Activated CD4-positive, alpha-beta T cell treated with anti-CD3 and anti-CD28 coated beads for 36 hours (primary cell): ENCODE measurements at regions of chr9 and their contacts with region 1.

Region 1: GRCh38 chr9:7298123-7298522 is 501.5 kb downstream of the DMAC1 start:
- DNase-seq: peak; percentile 76
- ATAC-seq: peak; percentile 95
- H3K4me3 Mint-ChIP-seq: no peak overlapping the region
- H3K27ac Mint-ChIP-seq: peak overlapping the region; percentile 7
- H3K4me1 Mint-ChIP-seq: peaks cover 20% of the 10 kb centered on the region
- H3K27me3 Mint-ChIP-seq: peaks cover 29% of the 10 kb centered on the region

Region 2: DNA sequence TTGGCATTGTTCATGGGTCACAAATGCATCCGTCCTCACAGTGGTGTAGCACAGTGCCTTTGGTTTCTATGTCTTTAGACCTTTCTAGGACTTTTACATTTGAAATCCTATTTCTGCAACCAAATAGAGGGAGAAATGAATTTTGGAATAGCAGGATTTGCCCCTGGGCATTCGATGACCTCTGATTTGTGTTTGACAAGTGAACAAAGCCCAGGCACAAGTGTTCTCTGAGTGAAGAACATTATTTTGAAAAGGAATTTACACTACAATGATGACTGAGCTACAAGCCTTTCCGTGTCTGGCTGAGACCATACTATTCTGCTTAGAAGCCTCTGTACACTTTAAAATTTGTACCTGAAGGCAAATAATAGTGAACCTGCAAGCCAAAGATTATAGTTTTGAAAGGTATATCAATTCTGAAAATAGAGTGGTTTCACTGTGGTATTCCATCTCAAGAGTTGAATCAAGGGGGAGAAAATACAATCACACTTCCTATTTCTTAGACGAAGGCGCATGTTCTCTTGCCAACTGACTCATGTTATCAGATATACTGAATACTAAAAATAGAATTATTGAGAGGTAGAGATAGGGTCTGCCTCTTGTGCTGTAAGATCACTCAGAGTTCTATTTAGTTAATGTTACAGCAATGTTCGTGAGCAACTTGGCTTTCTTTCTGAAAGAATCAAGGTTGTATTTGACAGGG is 242.8 kb before region 1 on chr9:
- CTCF ChIA-PET with region 1: no interaction called
- POLR2A ChIA-PET with region 1: no interaction called
- intact Hi-C with region 1: loop called in 1 of 2 experiments (anchors 10 kb)
- DNase-seq: no peak
- ATAC-seq: peak; percentile 30
- H3K4me3 Mint-ChIP-seq: no peak overlapping the region
- H3K27ac Mint-ChIP-seq: no peak overlapping the region
- H3K4me1 Mint-ChIP-seq: peaks cover 11% of the 10 kb centered on the region
- H3K27me3 Mint-ChIP-seq: no peaks in the 10 kb centered on the region

Region 3: DNA sequence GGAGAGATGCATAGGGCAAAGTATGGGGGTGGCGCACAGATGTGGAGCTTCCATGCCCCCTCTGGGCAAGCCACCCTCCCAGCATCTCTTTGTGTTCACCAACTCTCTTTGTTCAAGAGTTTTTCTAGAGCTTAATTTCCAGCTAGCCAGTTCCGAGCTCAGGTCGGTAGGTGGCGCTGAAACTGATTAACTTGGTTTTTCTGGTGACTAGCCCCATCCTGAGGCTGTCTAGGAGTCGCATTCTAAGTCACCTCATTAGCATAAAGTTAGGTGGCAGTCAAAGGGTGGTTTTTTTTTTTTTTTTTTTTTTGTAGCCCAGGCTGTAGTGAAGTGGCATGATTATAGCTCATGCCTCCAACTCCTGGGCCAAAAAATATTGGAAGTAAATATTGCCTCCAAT is 64.0 kb before region 1 on chr9:
- CTCF ChIA-PET with region 1: interaction called, 3 read pairs
- POLR2A ChIA-PET with region 1: interaction called, 3 read pairs
- intact Hi-C with region 1: loop called in 1 of 2 experiments (anchors 5 kb)
- DNase-seq: peak; percentile 76
- ATAC-seq: peak; percentile 96
- H3K4me3 Mint-ChIP-seq: no peak overlapping the region
- H3K27ac Mint-ChIP-seq: no peak overlapping the region
- H3K4me1 Mint-ChIP-seq: no peaks in the 10 kb centered on the region
- H3K27me3 Mint-ChIP-seq: peaks cover 12% of the 10 kb centered on the region

Region 4: GRCh38 chr9:7246917-7247522 is 51.1 kb before region 1 on chr9:
- CTCF ChIA-PET with region 1: no interaction called
- POLR2A ChIA-PET with region 1: no interaction called
- intact Hi-C with region 1: no loop called
- DNase-seq: no peak
- ATAC-seq: peak; percentile 55
- H3K4me3 Mint-ChIP-seq: no peak overlapping the region
- H3K27ac Mint-ChIP-seq: no peak overlapping the region
- H3K4me1 Mint-ChIP-seq: no peaks in the 10 kb centered on the region
- H3K27me3 Mint-ChIP-seq: peaks cover 2% of the 10 kb centered on the region

Region 5: GRCh38 chr9:7284517-7284916 is 13.6 kb before region 1 on chr9:
- CTCF ChIA-PET with region 1: no interaction called
- POLR2A ChIA-PET with region 1: no interaction called
- intact Hi-C with region 1: loop called in 1 of 2 experiments (anchors 2 kb)
- DNase-seq: no peak
- ATAC-seq: no peak
- H3K4me3 Mint-ChIP-seq: no peak overlapping the region
- H3K27ac Mint-ChIP-seq: no peak overlapping the region
- H3K4me1 Mint-ChIP-seq: peaks cover 3% of the 10 kb centered on the region
- H3K27me3 Mint-ChIP-seq: peaks cover 49% of the 10 kb centered on the region

Region 6: GRCh38 chr9:7405924-7406604 is 107.9 kb after region 1 on chr9:
- CTCF ChIA-PET with region 1: no interaction called
- POLR2A ChIA-PET with region 1: no interaction called
- intact Hi-C with region 1: loop called (anchors 1 kb)
- DNase-seq: no peak
- ATAC-seq: peak; percentile 39
- H3K4me3 Mint-ChIP-seq: no peak overlapping the region
- H3K27ac Mint-ChIP-seq: no peak overlapping the region
- H3K4me1 Mint-ChIP-seq: peaks cover 8% of the 10 kb centered on the region
- H3K27me3 Mint-ChIP-seq: peaks cover 19% of the 10 kb centered on the region